ENCODE measurements at regions of chr9 and their contacts with region 1.

Region 1: GRCh38 chr9:4792572-4793458 is at the start of gene RCL1:
- DNase-seq: peak; percentile 93 to 96
- ATAC-seq: peak; percentile 87 to 88
- H3K4me3 ChIP-seq: peak within 1 kb of the TSS; percentile 87 to 99 (median 97)
- H3K27ac ChIP-seq: peak within 1 kb of the TSS; percentile 94 to 100 (median 98)
- H3K4me1 ChIP-seq: peaks cover 31 to 39% of the 10 kb centered on the region in 2 donors
- H3K27me3 ChIP-seq: no peaks in the 10 kb centered on the region
- CTCF ChIP-seq: no peak
- POLR2A ChIP-seq: peak; percentile 96
- total RNA-seq, gene RCL1: 18.8 to 62.4 (median 26.2) TPM

Region 2: DNA sequence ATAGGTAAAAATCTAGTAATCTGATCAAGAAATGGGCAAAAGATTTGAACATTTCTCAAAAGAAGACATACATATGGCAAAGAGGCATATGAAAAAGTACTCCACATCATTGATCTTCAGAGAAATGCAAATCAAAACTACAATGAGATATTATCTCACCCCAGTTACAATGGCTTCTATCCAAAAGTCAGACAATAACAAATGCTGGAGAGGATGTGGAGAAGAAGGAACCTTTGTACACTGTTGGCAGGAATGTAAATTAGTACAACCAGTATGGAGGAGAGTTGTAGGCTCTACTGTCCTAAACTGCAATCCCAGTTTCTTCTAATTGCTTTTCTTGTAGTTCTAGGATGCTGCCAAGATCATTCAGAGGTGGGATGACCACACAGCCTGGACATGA is 1073.5 kb before region 1 on chr9:
- in situ Hi-C with region 1: no loop called
- intact Hi-C with region 1: no loop called
- DNase-seq: no peak
- ATAC-seq: no peak
- H3K4me3 ChIP-seq: no peak overlapping the region
- H3K27ac ChIP-seq: no peak overlapping the region
- H3K4me1 ChIP-seq: no peaks in the 10 kb centered on the region
- H3K27me3 ChIP-seq: no peaks in the 10 kb centered on the region
- CTCF ChIP-seq: no peak
- POLR2A ChIP-seq: no peak

Region 3: GRCh38 chr9:4297151-4297785 is 495.5 kb before region 1 on chr9:
- in situ Hi-C with region 1: no loop called
- intact Hi-C with region 1: loop called (anchors 5 kb)
- DNase-seq: peak; percentile 68 to 70
- ATAC-seq: peak; percentile 59 to 69
- H3K4me3 ChIP-seq: peak overlapping the region; percentile 67 to 87 (median 76)
- H3K27ac ChIP-seq: peak overlapping the region; percentile 80 to 87 (median 84)
- H3K4me1 ChIP-seq: peaks cover 14 to 20% of the 10 kb centered on the region in 2 donors
- H3K27me3 ChIP-seq: no peaks in the 10 kb centered on the region
- CTCF ChIP-seq: peak in 3 of 5 experiments; percentile 32 to 52 (median 47)
- POLR2A ChIP-seq: no peak

Region 4: GRCh38 chr9:4740638-4741364 is 52.0 kb before region 1 on chr9 and contains the start of gene AK3:
- in situ Hi-C with region 1: no loop called
- intact Hi-C with region 1: loop called (anchors 5 kb)
- DNase-seq: peak; percentile 77 to 80
- ATAC-seq: peak; percentile 77
- H3K4me3 ChIP-seq: peak within 1 kb of the TSS; percentile 83 to 89 (median 86)
- H3K27ac ChIP-seq: peak within 1 kb of the TSS; percentile 87 to 95 (median 92)
- H3K4me1 ChIP-seq: peaks cover 21% of the 10 kb centered on the region in 2 donors
- H3K27me3 ChIP-seq: no peaks in the 10 kb centered on the region
- CTCF ChIP-seq: peak in 4 of 5 experiments; percentile 7 to 48 (median 20)
- POLR2A ChIP-seq: peak; percentile 89
- total RNA-seq, gene AK3: 163 to 270 (median 188) TPM

Region 5: DNA sequence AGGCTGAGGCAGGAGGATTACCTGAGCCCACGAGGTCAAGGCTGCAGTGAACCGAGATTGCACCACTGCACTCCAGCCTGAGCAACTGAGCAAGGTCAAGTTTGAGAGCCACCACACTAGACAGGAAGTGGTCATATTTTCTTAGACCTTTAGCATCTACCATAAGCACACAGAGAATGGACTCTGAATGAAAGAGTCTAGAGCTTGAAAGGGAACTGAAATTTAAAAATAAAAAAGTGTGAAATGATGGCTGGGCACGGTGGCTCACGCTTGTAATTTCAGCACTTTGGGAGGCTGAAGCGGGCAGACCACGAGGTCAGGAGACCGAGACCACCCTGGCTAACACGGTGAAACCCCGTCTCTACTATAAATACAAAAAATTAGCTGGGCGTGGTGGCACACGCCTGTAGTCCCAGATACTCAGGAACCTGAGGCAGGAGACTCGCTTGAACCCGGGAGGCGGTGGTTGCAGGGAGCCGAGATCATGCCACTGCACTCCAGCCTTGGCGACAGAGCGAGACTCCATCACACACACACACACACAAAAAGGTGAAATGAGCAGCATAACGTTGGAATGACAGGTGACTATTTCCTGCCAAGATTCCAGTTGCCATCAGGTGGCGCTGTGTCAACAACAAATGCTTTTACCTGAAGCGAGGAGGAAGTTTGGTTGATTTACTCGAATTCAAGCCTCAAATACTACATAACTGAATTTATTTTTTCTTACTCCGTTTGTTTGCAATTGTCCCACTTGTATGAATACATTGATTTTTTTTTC is 30.5 kb before region 1 on chr9:
- in situ Hi-C with region 1: no loop called
- intact Hi-C with region 1: loop called (anchors 2 kb)
- DNase-seq: peak; percentile 42 to 65
- ATAC-seq: peak; percentile 69 to 80
- H3K4me3 ChIP-seq: peak overlapping the region; percentile 26 to 48 (median 32)
- H3K27ac ChIP-seq: peak overlapping the region; percentile 39 to 50 (median 40)
- H3K4me1 ChIP-seq: peaks cover 9 to 13% of the 10 kb centered on the region in 2 donors
- H3K27me3 ChIP-seq: no peaks in the 10 kb centered on the region
- CTCF ChIP-seq: peak; percentile 78 to 87 (median 81)
- POLR2A ChIP-seq: no peak

Region 6: DNA sequence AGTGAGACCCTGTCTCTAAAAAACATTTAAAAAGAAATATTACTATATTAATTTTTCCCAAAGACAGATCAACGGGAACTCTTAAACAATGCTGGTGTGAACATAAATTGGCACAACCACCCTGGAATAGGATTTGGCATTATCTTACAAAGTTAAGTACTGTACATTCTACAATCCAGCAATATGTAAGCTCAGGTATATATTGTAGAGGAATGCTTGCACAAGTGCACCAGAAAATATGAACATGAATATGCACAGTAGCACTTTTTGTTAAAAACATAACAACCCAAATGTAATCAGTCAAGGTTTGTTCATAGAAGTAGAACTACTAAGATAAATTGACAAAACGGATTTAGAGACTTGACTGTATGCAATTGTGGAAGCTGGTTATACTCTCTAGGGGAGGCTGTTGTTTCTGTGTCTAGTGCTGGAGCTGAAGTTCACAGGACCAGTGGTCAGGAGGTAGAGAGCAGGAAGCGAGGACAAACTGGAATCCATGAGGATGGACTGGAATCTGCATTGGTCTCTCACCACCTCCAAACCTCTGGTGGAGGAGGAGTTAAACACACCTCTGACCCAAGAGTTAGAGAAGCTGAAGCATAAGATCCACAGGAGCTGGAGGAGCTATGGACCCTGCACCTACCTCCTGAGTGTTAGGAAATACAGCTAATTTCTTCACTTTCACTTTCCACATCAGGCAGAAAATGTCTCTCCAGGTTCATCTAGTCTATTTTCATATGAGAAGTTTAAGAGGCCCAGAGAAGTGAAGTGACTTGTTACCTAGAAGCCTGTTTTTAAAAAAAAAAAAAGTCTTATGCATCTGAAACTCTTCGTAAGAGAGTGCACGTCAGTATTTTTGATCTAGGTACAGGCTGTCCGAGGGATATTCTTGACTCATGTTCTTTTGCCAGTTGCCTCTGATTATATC is 815.7 kb after region 1 on chr9:
- in situ Hi-C with region 1: loop called in 1 of 4 experiments (anchors 25 kb)
- intact Hi-C with region 1: no loop called
- DNase-seq: peak; percentile 37 to 41
- ATAC-seq: peak; percentile 87 to 91
- H3K4me3 ChIP-seq: peak overlapping the region; percentile 46 to 56 (median 51)
- H3K27ac ChIP-seq: peak overlapping the region; percentile 77 to 86 (median 84)
- H3K4me1 ChIP-seq: peaks cover 28 to 36% of the 10 kb centered on the region in 2 donors
- H3K27me3 ChIP-seq: no peaks in the 10 kb centered on the region
- CTCF ChIP-seq: no peak
- POLR2A ChIP-seq: no peak